ENCODE measurements at regions of chr3 and their contacts with region 1.

Region 1: DNA sequence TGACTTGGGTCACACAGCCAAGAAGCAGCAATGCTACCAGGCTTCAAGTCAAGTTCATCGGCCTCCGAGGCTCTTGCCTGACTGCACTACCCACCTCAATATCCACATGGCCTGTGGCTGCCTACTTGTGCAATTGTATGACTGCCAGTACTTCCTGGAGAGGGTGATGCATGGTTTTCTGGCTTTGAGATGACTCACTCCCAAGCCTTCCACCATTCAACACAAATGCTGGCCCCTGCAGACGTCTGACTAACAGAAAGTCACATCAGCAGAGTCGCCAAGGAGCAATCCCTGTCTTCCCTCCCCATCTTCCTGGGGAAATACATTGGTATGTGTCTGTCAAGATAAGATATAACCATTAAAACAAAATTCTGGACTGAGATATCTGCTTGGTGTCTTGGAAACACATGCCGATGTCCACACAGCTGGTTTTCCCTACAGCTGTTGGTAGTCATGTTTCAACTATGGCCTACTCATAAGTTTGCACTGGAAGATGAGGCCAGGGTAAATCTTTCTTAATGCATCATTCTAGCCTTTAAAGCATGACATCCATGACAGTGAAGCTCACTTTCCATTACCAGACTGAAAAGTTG is 79.6 kb upstream of the SPATA12 start:
- DNase-seq: peak; percentile 68
- ATAC-seq: peak; percentile 86
- H3K4me3 ChIP-seq: no peak overlapping the region
- H3K27ac ChIP-seq: no peak overlapping the region
- H3K4me1 ChIP-seq: peaks cover 7 to 18% of the 10 kb centered on the region in 2 experiments; a peak in 3 of 4 replicates
- H3K27me3 ChIP-seq: no peaks in the 10 kb centered on the region
- CTCF ChIP-seq: no peak
- POLR2A ChIP-seq: no peak
- RAD21 ChIP-seq: no peak

Region 2: DNA sequence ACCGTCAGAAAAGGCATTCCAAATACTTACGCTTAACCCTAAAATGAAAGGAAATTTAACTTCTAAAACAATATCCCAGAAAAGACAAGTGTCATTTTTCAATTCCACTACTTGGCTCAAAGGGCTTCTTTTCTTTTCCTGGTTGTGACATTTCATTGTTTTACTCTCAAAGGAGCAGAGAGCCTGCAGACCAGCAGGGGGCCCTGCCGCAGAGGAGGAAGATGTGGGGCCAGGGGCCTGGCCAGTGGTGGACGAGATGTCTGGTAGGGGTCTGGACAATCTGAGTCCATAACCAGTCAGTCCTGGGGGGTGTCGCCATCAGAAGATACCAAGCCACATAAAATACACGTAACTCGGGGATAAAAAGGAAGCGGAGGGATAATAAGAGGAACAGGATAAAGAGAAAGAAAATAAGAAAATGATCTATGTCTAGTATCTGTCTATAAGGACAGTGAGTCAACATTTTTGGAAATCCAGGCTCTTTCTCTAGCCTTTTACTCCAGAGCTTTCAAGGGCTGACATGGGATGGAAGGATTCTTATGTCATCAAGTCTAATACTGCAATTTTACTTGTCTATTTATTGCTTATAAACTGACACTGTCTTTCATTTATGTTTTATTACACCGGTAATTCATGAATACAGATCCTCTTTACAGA is 124.9 kb before region 1 on chr3:
- CTCF ChIA-PET with region 1: no interaction called
- POLR2A ChIA-PET with region 1: no interaction called
- RAD21 ChIA-PET with region 1: no interaction called
- intact Hi-C with region 1: loop called (anchors 5 kb)
- DNase-seq: no peak
- ATAC-seq: peak; percentile 80
- H3K4me3 ChIP-seq: no peak overlapping the region
- H3K27ac ChIP-seq: no peak overlapping the region
- H3K4me1 ChIP-seq: peaks cover 9 to 32% of the 10 kb centered on the region in 2 experiments; a peak in 3 of 4 replicates
- H3K27me3 ChIP-seq: no peaks in the 10 kb centered on the region
- CTCF ChIP-seq: peak; percentile 61 to 96 (median 87); a peak in 5 of 6 replicates
- POLR2A ChIP-seq: no peak
- RAD21 ChIP-seq: peak; percentile 72